ENCODE measurements at regions of chr5 and their contacts with region 1.

Region 1: DNA sequence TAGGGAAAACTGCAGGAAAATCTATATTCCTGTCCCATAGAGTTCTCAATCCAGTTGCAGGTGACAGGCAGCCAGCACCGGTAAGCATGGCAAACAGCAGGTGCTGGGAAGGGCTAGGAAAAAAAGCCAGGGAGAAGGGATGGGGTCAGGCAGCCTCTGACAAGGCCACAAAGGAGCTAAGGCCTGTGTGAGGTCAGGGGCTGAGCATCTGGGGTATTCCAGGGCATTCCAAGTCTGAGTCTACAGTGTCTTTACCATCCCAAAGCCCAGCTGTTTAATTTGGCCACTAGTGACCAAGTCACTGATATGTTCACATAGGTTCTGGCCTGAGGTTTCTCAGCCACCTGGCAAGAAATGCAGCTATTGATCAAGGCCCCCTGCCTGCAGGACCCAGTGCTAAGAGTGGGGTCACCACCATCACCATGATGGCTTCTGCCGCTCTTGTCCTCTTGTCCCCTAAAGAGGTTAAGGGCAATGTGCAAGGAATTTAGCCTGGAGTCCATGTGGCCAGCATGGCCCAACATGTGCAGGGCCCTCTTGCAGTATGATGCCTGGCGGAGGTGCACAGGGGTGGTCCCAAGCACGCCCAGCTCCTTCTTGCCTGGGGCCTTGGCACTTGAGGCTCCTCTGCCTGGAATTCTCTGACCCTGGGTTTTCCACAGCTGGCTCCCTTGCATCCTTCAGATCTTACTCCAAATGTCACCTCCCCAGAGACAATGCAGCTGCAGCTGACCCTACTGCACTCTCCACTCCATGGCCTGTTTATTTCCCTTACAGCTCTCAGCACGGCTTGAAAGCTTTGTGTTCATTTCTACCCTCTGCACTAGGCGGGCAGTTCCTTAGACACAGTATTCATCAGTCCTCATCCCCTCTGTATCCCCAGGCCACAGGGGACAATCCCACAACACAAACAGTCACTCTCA is 213.1 kb downstream of the MSX2 start:
- DNase-seq: no peak
- CTCF ChIP-seq: no peak

Region 2: GRCh38 chr5:174708476-174709207 is 228.8 kb before region 1 on chr5:
- CTCF ChIA-PET with region 1: no interaction called
- POLR2A ChIA-PET with region 1: no interaction called
- DNase-seq: no peak
- CTCF ChIP-seq: no peak

Region 3: DNA sequence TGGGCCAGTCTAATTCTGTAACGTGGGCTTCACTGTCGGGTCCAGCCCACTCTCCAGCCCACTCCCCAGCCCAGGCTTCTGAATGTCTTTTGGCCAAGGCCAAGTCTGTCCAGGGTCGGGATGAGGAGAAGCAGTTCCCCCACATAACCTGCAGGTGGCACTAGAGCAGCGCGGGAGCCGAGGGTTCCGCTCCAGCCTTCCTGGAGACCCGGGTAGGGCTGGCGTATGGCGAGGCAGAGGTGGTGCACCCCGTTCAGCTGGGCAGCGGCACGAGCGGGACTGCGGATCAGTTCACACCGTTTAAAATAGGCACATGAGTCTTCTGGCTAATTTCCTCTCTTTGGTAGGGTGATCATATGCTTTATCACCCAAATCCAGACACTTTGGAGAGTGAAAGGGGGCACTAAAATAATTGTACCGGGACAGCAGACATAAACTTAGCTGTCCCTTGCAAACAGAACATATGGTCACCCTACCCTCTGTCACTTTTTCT is 27.2 kb before region 1 on chr5:
- CTCF ChIA-PET with region 1: interaction called, 10 read pairs
- POLR2A ChIA-PET with region 1: no interaction called
- DNase-seq: peak; percentile 74
- CTCF ChIP-seq: peak; percentile 90

Region 4: DNA sequence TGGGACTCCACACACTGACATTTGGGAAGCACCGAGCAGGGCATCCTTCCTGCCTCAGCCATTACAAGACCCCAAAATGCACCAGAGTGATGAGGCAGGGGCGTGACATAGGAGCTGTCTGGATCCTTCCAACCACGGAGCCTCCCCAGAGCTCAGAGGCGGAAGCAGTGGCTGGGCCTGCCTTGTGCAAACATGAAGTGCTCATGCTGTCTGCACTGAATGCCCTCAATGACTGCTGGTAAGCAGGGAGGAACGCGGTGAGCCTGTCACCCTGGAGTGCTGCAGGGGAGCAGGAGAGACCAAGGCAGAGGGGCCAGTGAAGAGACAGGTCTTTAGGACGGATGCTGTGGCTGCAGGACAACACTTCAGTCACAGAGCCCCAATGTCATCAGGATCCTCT is 660.3 kb after region 1 on chr5:
- CTCF ChIA-PET with region 1: no interaction called
- POLR2A ChIA-PET with region 1: no interaction called
- DNase-seq: no peak
- CTCF ChIP-seq: no peak